Activated T-helper 2 cell treated with anti-CD3 and anti-CD28 coated beads, Interferon-gamma antibody, Interleukin-2, Interleukin-4, amounts not matched to agents 10 μg/mL and 5 μg/mL and 100 μg/mL, durations not matched to agents 14 hours and 24 hours and 36 hours (primary cell): ENCODE measurements at regions of chr13 and their contacts with region 1.

Region 1: GRCh38 chr13:77329133-77329910 is 2.4 kb upstream of the MYCBP2 start:
- DNase-seq: peak; percentile 93
- H3K4me3 Mint-ChIP-seq: peak overlapping the region; percentile 99
- H3K27ac Mint-ChIP-seq: peak overlapping the region; percentile 99
- H3K4me1 Mint-ChIP-seq: peaks cover 36% of the 10 kb centered on the region
- H3K27me3 Mint-ChIP-seq: peaks cover 3% of the 10 kb centered on the region

Region 2: GRCh38 chr13:76991796-76992547 is 337.4 kb before region 1 on chr13 and contains the start of gene CLN5:
- intact Hi-C with region 1: loop called (anchors 1 kb)
- DNase-seq: peak; percentile 95
- H3K4me3 Mint-ChIP-seq: peak within 1 kb of the TSS; percentile 89
- H3K27ac Mint-ChIP-seq: peak within 1 kb of the TSS; percentile 90
- H3K4me1 Mint-ChIP-seq: peaks cover 34% of the 10 kb centered on the region
- H3K27me3 Mint-ChIP-seq: peaks cover 1% of the 10 kb centered on the region
- total RNA-seq, gene CLN5: 13.5 and 15.8 TPM in 2 replicates

Region 3: GRCh38 chr13:77184455-77184854 is 144.9 kb before region 1 on chr13:
- intact Hi-C with region 1: loop called (anchors 2 kb)
- DNase-seq: no peak
- H3K4me3 Mint-ChIP-seq: no peak overlapping the region
- H3K27ac Mint-ChIP-seq: peak overlapping the region; percentile 43
- H3K4me1 Mint-ChIP-seq: peaks cover 17% of the 10 kb centered on the region
- H3K27me3 Mint-ChIP-seq: no peaks in the 10 kb centered on the region

Region 4: DNA sequence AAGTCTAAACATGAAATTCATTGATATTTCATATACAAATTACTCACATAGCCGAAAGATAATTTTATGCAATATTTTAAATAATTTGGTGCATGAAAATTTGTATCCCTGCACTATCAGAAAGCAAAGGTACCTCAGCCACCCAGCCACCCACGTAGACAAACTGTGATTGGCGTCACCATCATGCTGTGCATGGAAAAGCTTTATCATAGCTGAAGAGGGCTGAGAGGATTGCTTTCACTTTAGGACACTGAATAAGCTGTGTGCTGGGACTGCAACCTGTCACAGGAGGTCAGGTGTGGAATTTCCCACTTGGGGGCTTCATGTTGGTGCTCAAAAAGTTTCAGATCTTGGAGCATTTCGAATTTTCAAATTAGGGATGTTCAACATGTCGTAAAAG is 98.8 kb before region 1 on chr13:
- intact Hi-C with region 1: no loop called
- DNase-seq: no peak
- H3K4me3 Mint-ChIP-seq: no peak overlapping the region
- H3K27ac Mint-ChIP-seq: peak overlapping the region; percentile 73
- H3K4me1 Mint-ChIP-seq: peaks cover 22% of the 10 kb centered on the region
- H3K27me3 Mint-ChIP-seq: no peaks in the 10 kb centered on the region

Region 5: GRCh38 chr13:77267362-77267761 is 62.0 kb before region 1 on chr13:
- intact Hi-C with region 1: no loop called
- DNase-seq: no peak
- H3K4me3 Mint-ChIP-seq: no peak overlapping the region
- H3K27ac Mint-ChIP-seq: no peak overlapping the region
- H3K4me1 Mint-ChIP-seq: peaks cover 2% of the 10 kb centered on the region
- H3K27me3 Mint-ChIP-seq: no peaks in the 10 kb centered on the region

Region 6: GRCh38 chr13:77345150-77345780 is 15.9 kb after region 1 on chr13:
- intact Hi-C with region 1: loop called (anchors 1 kb)
- DNase-seq: no peak
- H3K4me3 Mint-ChIP-seq: no peak overlapping the region
- H3K27ac Mint-ChIP-seq: peak overlapping the region; percentile 80
- H3K4me1 Mint-ChIP-seq: peaks cover 14% of the 10 kb centered on the region
- H3K27me3 Mint-ChIP-seq: no peaks in the 10 kb centered on the region

Region 7: DNA sequence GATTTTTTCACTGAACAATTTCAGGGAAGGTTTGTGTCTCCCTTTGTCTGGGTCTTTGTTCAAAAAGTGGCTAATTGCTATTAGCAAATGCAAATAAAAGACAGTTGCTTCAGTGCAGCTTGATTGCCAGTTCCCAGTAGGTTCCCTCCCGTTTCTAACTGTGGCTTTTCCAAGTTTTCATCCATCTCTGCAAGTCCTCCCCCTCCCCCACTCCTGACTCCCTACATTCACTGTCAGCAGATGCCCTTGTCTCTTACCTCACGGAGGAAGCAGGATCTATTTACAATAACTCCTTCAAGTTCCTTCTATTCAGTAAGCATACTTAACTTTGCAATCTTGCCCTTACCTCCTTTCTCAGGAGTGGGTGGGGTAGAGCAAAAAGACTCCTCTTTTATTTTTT is 150.7 kb after region 1 on chr13:
- intact Hi-C with region 1: loop called (anchors 1 kb)
- DNase-seq: no peak
- H3K4me3 Mint-ChIP-seq: no peak overlapping the region
- H3K27ac Mint-ChIP-seq: no peak overlapping the region
- H3K4me1 Mint-ChIP-seq: peaks cover 11% of the 10 kb centered on the region
- H3K27me3 Mint-ChIP-seq: peaks cover 15% of the 10 kb centered on the region

Region 8: DNA sequence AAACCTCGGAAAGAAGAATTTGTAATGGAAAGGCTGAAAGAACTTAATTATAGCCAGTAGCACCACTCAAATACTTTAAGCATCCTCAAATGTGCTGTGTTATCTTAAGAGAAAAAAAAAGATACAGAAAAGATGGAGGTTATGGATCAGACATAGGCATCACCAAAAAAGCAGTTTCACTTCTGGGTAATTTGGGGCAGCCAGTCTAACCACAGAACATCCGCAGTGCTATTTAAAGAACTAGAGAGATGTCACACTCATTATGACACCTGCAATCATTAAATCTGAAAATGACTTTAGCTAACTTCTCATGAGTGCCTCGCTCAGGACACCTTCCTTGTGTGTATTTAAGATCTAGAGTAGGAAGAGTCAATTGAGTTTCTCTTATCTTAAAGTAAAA is 1865.0 kb after region 1 on chr13:
- intact Hi-C with region 1: loop called (anchors 10 kb)
- DNase-seq: peak; percentile 63
- H3K4me3 Mint-ChIP-seq: no peak overlapping the region
- H3K27ac Mint-ChIP-seq: no peak overlapping the region
- H3K4me1 Mint-ChIP-seq: peaks cover 51% of the 10 kb centered on the region
- H3K27me3 Mint-ChIP-seq: peaks cover 15% of the 10 kb centered on the region